IMR-90 (cell line): ENCODE measurements at regions of chr6 and their contacts with region 1.

Region 1: DNA sequence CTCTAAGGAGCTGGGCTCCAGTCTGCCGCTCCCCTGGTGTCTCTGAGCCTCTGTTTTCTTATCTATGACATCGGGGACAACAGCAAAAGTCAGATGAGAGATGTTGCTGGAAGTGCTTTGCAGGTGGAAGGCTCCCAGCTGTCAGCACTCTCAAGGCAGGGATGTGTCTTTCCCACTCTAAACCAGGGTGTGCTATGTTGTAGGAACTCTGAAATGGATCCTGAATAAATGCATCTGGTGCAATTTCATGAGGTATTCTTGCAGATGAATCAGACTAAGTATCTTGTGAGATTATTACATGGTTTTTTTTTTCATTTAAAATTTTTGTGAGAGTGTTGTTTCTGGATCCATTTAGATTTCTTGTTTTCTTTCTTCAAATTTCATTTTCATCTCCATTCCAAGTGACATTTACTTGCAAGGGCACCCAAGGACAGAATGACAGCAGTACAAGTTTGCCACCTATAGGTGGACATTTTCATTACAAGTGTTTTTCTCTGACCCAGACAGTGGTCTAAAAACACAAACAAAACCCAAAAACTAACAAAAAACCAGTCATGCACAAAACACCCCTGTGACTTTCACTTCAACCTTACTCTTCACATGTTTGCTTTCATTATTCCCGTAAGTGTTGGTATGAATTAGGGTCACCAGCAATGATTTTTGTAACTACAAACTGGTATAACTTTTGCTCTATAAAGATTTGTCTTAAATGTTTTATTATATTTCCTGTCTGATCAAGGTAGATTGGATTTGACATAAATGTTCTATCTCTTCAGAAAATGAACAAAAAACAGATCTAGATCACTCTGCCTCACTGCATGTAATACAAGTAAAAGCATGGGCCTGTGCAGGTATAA is 14.7 kb upstream of the SIM1 start:
- DNase-seq: peak; percentile 49
- ATAC-seq: peak; percentile 83
- H3K4me3 ChIP-seq: no peak overlapping the region
- H3K27ac ChIP-seq: no peak overlapping the region
- H3K4me1 ChIP-seq: no peaks in the 10 kb centered on the region
- H3K27me3 ChIP-seq: peaks cover 25% of the 10 kb centered on the region
- CTCF ChIP-seq: peak; percentile 77
- POLR2A ChIP-seq: 0 out of 2 replicates have a peak, but pooled peaks have one; percentile 33
- RAD21 ChIP-seq: peak; percentile 89

Region 2: DNA sequence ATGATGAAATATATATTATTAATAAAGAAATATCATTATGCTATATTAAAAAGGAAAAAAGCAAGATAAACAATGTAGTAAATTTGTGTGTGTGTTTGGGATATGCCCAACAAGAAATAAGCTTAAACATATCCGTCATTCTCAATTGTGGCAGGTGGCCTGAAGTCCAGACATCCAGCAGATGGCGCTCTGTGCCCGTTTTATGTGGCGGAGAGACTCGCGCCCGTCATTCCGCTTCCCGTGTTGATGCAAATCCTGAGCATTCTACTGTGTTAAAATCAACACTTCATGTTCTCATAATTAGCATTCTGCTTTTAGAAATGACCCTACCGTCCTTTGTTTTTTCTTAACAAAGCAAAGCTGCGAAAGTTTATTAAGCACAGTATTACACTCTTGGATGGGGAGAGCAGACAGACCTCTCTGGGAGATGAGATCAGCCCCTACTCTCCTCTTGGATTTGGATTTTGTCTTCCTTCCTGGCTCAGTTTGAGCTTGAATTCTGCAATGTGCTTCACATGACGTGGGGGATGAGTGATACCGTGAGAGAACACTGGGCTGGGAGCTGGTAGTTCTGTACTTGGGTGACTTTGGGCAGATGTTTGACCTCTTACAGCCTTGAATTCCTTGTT is 611.2 kb before region 1 on chr6:
- CTCF ChIA-PET with region 1: interaction called, 4 read pairs
- POLR2A ChIA-PET with region 1: no interaction called
- dilution Hi-C with region 1: no loop called
- in situ Hi-C with region 1: loop called (anchors 25 kb)
- intact Hi-C with region 1: loop called (anchors 5 kb)
- DNase-seq: peak; percentile 51
- ATAC-seq: peak; percentile 93
- H3K4me3 ChIP-seq: no peak overlapping the region
- H3K27ac ChIP-seq: no peak overlapping the region
- H3K4me1 ChIP-seq: no peaks in the 10 kb centered on the region
- H3K27me3 ChIP-seq: peaks cover 31% of the 10 kb centered on the region
- CTCF ChIP-seq: peak; percentile 84
- POLR2A ChIP-seq: no peak
- RAD21 ChIP-seq: peak; percentile 87

Region 3: DNA sequence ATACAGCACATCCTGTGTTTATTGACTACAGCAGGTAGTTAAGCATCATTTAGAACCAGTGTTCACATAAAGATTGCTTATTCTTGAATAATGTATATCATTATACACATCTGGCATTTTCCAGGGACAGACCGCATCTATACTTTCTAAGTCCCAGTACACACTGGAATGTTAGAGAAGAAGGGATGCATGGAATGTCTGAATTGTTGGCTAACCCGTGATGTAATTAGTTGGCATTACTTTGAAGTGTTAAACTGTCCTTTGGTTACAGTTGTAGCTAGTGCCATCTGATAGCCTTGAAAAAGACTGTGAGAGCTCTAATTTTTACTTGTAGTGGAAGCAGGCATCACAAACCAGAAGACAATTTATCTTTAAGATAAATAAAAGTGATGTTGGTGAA is 455.6 kb before region 1 on chr6:
- CTCF ChIA-PET with region 1: no interaction called
- POLR2A ChIA-PET with region 1: no interaction called
- dilution Hi-C with region 1: no loop called
- in situ Hi-C with region 1: loop called (anchors 10 kb)
- intact Hi-C with region 1: no loop called
- DNase-seq: no peak
- ATAC-seq: no peak
- H3K4me3 ChIP-seq: no peak overlapping the region
- H3K27ac ChIP-seq: no peak overlapping the region
- H3K4me1 ChIP-seq: no peaks in the 10 kb centered on the region
- H3K27me3 ChIP-seq: no peaks in the 10 kb centered on the region
- CTCF ChIP-seq: no peak
- POLR2A ChIP-seq: no peak
- RAD21 ChIP-seq: no peak

Region 4: GRCh38 chr6:100116411-100117194 is 362.8 kb before region 1 on chr6:
- CTCF ChIA-PET with region 1: interaction called, 9 read pairs
- POLR2A ChIA-PET with region 1: no interaction called
- dilution Hi-C with region 1: loop called (anchors 25 kb)
- in situ Hi-C with region 1: loop called (anchors 5 kb)
- intact Hi-C with region 1: loop called (anchors 1 kb)
- DNase-seq: peak; percentile 76
- ATAC-seq: peak; percentile 88
- H3K4me3 ChIP-seq: no peak overlapping the region
- H3K27ac ChIP-seq: no peak overlapping the region
- H3K4me1 ChIP-seq: no peaks in the 10 kb centered on the region
- H3K27me3 ChIP-seq: peaks cover 47% of the 10 kb centered on the region
- CTCF ChIP-seq: peak; percentile 87
- POLR2A ChIP-seq: peak; percentile 30; the same call in 1 of the 2 replicates
- RAD21 ChIP-seq: peak; percentile 94

Region 5: DNA sequence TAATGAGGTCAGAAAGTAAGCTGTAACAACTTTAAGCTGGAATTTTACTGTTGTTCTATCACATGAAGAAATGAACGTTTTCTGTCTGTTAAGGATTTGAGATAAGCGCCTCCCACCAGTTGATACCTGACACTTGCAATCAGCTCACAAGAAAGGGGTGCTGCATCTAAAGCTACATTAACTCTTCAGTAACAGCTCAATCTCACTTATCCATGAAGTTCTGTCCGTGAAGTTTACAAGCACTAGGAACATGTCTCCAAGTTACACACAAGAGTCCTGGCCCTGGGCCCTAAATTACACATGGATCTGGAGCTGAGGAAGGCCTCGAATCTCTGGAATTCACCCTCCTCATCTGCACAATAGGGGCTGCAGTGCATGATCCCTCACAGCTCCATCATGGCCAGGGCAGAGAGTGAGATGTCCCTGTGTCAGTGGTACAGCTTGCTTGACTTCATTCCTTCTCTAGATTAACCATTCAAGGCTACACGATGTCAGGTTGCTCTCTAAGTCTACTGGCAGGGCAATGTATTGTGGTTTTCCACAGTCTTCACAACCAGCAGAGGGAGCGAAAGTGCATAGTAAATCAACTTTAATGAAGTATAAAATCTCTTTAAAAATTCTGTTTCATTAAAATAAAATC is 303.0 kb before region 1 on chr6:
- CTCF ChIA-PET with region 1: no interaction called
- POLR2A ChIA-PET with region 1: no interaction called
- dilution Hi-C with region 1: no loop called
- in situ Hi-C with region 1: no loop called
- intact Hi-C with region 1: loop called (anchors 1 kb)
- DNase-seq: peak; percentile 74
- ATAC-seq: peak; percentile 76
- H3K4me3 ChIP-seq: no peak overlapping the region
- H3K27ac ChIP-seq: peak overlapping the region; percentile 74
- H3K4me1 ChIP-seq: peaks cover 14% of the 10 kb centered on the region
- H3K27me3 ChIP-seq: no peaks in the 10 kb centered on the region
- CTCF ChIP-seq: peak; percentile 58
- POLR2A ChIP-seq: no peak
- RAD21 ChIP-seq: peak; percentile 54